ENCODE measurements at regions of chr9 and their contacts with region 1.

Region 1: GRCh38 chr9:123349691-123350480 is 6.1 kb upstream of the CRB2 start:
- DNase-seq: no peak
- ATAC-seq: peak; percentile 75 to 76

Region 2: DNA sequence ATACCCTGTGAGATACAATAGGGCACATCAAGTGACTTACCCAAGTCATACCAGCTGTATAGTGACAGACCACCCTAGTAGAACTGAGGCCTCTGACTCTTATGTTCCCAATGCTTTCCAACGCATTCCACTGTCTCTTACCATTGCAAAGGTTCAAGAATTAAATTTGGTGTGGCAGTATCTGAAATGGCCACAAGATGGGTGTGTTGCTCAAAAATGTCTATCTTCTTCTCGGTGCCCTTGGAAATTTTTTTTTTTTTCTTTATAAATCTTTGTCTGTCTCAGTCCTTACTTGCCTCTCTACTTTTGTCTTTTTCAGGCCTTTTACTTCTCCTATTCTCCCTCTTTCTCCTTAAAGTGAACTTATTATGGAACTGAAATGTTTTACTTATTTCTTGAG is 268.1 kb before region 1 on chr9:
- intact Hi-C with region 1: loop called in 1 of 2 experiments (anchors 5 kb)
- DNase-seq: no peak
- ATAC-seq: peak in 1 of 2 donors; percentile 41

Region 3: GRCh38 chr9:123091459-123091858 is 258.4 kb before region 1 on chr9:
- intact Hi-C with region 1: loop called in 1 of 2 experiments (anchors 10 kb)
- DNase-seq: no peak
- ATAC-seq: no peak

Region 4: GRCh38 chr9:123383512-123384170 is 33.8 kb after region 1 on chr9:
- intact Hi-C with region 1: loop called in 1 of 2 experiments (anchors 2 kb)
- DNase-seq: no peak
- ATAC-seq: no peak

Measured in left cardiac atrium (tissue), 4 donors.